Activated CD4-positive, alpha-beta T cell treated with anti-CD3 and anti-CD28 coated beads for 36 hours (primary cell): ENCODE measurements at regions of chr15 and their contacts with region 1.

Region 1: DNA sequence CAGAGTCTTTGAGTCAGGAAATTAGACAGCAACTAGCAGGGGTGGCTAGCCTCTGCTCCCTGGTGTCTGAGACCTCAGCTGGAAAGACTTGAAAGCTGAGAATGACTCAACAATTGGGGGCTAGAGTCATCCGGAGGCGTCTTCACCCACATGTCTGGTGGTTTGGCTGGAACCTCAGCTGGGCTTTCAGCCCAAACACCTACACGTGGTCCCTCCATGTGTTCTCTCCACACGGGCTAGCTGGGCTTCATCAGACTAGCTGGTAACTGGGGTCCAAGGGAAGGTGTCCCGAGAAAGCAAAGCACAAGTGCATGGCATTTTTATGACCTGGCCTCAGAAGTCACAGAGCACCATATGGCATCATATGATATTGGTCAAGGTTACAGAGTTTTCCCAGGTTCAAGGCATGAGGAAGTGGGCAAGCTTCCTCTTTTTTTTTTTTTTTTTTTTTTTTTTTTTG is 19.9 kb upstream of the ABHD2 start:
- DNase-seq: peak; percentile 70
- ATAC-seq: peak; percentile 87
- H3K4me3 Mint-ChIP-seq: no peak overlapping the region
- H3K27ac Mint-ChIP-seq: peak overlapping the region; percentile 31
- H3K4me1 Mint-ChIP-seq: peaks cover 13% of the 10 kb centered on the region
- H3K27me3 Mint-ChIP-seq: no peaks in the 10 kb centered on the region

Region 2: GRCh38 chr15:89334510-89335288 is 266.3 kb after region 1 on chr15 and contains the start of gene POLG:
- CTCF ChIA-PET with region 1: no interaction called
- POLR2A ChIA-PET with region 1: no interaction called
- intact Hi-C with region 1: loop called in 1 of 2 experiments (anchors 5 kb)
- DNase-seq: peak; percentile 99
- ATAC-seq: peak; percentile 92
- H3K4me3 Mint-ChIP-seq: peak within 1 kb of the TSS; percentile 80
- H3K27ac Mint-ChIP-seq: peak within 1 kb of the TSS; percentile 87
- H3K4me1 Mint-ChIP-seq: peaks cover 56% of the 10 kb centered on the region
- H3K27me3 Mint-ChIP-seq: peaks cover 2% of the 10 kb centered on the region
- total RNA-seq, gene POLG: 63.2 to 80.4 TPM